ENCODE measurements at regions of chrX and their contacts with region 1.

Region 1: DNA sequence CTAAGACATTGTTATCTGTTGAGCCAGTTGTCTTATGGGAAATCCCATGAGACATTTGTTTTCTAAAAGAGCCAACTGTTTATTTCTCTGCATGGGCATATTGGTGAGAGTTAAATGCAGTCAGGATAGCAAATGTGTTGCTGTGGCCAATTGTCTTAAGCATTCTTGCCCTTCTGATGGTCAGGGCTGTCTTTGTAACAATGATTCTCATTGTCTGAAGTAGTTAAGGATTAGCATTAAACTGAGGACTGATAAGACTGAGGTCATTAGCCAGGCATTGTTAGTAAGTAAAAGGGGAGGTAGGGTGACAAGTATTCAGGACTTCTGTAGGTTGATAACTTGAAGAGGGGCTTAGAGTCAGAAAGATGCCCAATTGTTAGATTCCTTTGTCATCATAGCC is 11.2 kb upstream of the MORF4L2 start:
- DNase-seq: no peak
- ATAC-seq: no peak
- H3K4me3 ChIP-seq: no peak overlapping the region
- H3K27ac ChIP-seq: no peak overlapping the region
- H3K4me1 ChIP-seq: no peaks in the 10 kb centered on the region
- H3K27me3 ChIP-seq: no peaks in the 10 kb centered on the region
- CTCF ChIP-seq: no peak
- POLR2A ChIP-seq: no peak

Region 2: DNA sequence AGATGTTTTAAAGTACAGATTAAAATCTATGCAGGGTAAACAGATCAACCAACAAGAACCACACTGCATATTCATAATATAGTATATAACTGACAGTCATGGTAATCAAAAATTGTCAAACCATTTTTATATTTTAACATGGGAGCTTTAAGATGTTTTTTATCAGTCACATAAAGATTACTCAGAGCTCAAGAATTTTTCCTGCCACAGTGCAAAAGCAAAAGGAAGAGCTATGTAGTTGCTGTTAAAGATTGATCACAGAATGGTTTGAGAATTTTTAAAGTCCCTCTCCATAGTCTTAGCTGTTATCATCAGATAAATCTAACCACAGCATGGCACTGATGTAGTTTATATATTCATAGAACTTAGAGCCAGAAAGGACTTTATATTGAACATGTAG is 125.9 kb after region 1 on chrX:
- in situ Hi-C with region 1: loop called in 2 of 4 experiments (anchors 10 to 25 kb)
- intact Hi-C with region 1: no loop called
- DNase-seq: no peak
- ATAC-seq: no peak
- H3K4me3 ChIP-seq: no peak overlapping the region
- H3K27ac ChIP-seq: no peak overlapping the region
- H3K4me1 ChIP-seq: no peaks in the 10 kb centered on the region
- H3K27me3 ChIP-seq: no peaks in the 10 kb centered on the region
- CTCF ChIP-seq: no peak
- POLR2A ChIP-seq: no peak